ENCODE measurements at regions of chr2 and their contacts with region 1.

Region 1: DNA sequence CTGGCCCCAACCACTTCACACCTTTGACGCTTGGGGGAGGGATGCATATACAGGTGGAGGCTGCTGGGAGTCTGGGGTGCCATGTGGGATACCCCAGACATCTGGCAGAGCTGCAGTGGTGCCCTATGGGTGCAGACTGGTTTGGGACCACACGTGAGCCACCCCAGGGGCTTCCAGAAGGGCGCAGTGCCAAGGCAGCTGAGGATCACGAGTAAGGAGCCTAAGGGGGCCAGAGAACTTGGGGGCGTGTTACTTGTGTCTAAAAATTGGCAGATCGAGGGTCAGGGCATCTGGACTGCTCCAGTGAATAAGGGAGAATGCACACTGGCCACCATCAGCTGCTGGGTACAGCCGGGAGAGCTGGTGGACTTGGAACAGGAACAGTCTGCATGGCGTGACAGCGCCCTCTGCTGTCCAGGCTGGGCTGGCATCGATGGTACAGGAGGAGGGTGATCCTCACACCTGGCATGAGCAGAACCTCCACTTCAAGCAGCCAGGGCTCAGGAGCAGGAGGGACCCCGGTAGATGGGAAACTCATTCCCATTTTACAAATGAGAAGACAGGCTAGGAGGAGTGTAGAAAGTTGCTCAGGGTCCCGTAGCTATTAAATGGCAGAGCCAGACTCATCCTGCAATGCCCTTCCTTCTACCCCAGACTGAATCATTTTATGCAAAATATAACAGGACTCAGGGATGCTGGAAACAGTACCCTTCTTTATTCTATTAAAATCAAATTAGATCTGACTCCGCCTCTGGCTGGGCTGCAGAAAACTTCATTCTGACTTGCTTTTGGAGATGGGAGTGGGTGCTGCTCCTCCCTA is 60.4 kb downstream of the ATOH8 start:
- DNase-seq: peak; percentile 84 to 93
- ATAC-seq: peak; percentile 94 to 98
- H3K4me3 ChIP-seq: no peak overlapping the region
- H3K27ac ChIP-seq: peak overlapping the region in 2 of 4 donors; percentile 1 to 27
- H3K4me1 ChIP-seq: peaks cover 8 to 11% of the 10 kb centered on the region in 2 donors
- H3K27me3 ChIP-seq: no peaks in the 10 kb centered on the region
- CTCF ChIP-seq: peak; percentile 96 to 99 (median 98)
- POLR2A ChIP-seq: no peak

Region 2: GRCh38 chr2:85595301-85596025 is 218.7 kb before region 1 on chr2 and contains the start of gene RNF181:
- in situ Hi-C with region 1: no loop called
- intact Hi-C with region 1: no loop called
- DNase-seq: peak; percentile 98
- ATAC-seq: peak; percentile 99
- H3K4me3 ChIP-seq: peak within 1 kb of the TSS; percentile 55 to 98 (median 78)
- H3K27ac ChIP-seq: peak within 1 kb of the TSS; percentile 87 to 99 (median 94)
- H3K4me1 ChIP-seq: peaks cover 49 to 55% of the 10 kb centered on the region in 2 donors
- H3K27me3 ChIP-seq: no peaks in the 10 kb centered on the region
- CTCF ChIP-seq: no peak
- POLR2A ChIP-seq: peak; percentile 90 to 92
- total RNA-seq, gene RNF181: 207 to 235 (median 215) TPM

Region 3: DNA sequence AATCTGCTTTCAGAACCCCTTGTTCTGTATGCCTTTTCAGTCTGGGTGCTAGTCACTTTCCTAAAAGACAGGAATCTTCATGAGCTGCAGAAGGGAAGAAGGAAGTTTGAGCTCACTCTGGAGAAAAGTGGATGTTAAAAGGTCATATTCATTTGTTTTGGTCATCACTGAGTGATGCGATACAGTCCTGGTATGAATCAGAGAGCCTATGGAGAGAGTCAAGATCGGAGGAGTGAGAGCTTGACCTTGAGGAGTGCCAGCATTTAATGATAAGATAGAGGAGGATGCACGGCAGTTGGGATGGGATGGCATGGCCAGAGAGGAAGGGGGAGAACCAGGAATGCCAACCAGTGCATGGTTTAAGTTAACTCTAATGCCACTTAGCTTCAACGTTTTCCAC is 178.6 kb before region 1 on chr2:
- in situ Hi-C with region 1: loop called (anchors 5 to 10 kb)
- intact Hi-C with region 1: loop called (anchors 1 kb)
- DNase-seq: no peak
- ATAC-seq: no peak
- H3K4me3 ChIP-seq: no peak overlapping the region
- H3K27ac ChIP-seq: peak overlapping the region in 1 of 4 donors; percentile 1
- H3K4me1 ChIP-seq: no peaks in the 10 kb centered on the region
- H3K27me3 ChIP-seq: no peaks in the 10 kb centered on the region
- CTCF ChIP-seq: no peak
- POLR2A ChIP-seq: no peak

Region 4: GRCh38 chr2:85642725-85643124 is 171.5 kb before region 1 on chr2:
- in situ Hi-C with region 1: loop called (anchors 5 to 10 kb)
- intact Hi-C with region 1: loop called (anchors 1 kb)
- DNase-seq: peak in 1 of 2 donors; percentile 1
- ATAC-seq: no peak
- H3K4me3 ChIP-seq: no peak overlapping the region
- H3K27ac ChIP-seq: peak overlapping the region in 3 of 4 donors; percentile 77 to 92 (median 87)
- H3K4me1 ChIP-seq: peaks cover 8 to 11% of the 10 kb centered on the region in 2 donors
- H3K27me3 ChIP-seq: no peaks in the 10 kb centered on the region
- CTCF ChIP-seq: no peak
- POLR2A ChIP-seq: no peak

Region 5: GRCh38 chr2:85678794-85679672 is 135.2 kb before region 1 on chr2:
- in situ Hi-C with region 1: no loop called
- intact Hi-C with region 1: loop called (anchors 2 kb)
- DNase-seq: peak; percentile 86 to 94
- ATAC-seq: peak; percentile 38 to 50
- H3K4me3 ChIP-seq: no peak overlapping the region
- H3K27ac ChIP-seq: peak overlapping the region; percentile 87 to 93 (median 90)
- H3K4me1 ChIP-seq: peaks cover 45 to 57% of the 10 kb centered on the region in 2 donors
- H3K27me3 ChIP-seq: no peaks in the 10 kb centered on the region
- CTCF ChIP-seq: peak; percentile 98 to 100 (median 99)
- POLR2A ChIP-seq: no peak

Region 6: GRCh38 chr2:85723707-85724360 is 90.4 kb before region 1 on chr2:
- in situ Hi-C with region 1: loop called (anchors 5 to 10 kb)
- intact Hi-C with region 1: loop called (anchors 1 kb)
- DNase-seq: peak in 1 of 2 donors; percentile 4
- ATAC-seq: no peak
- H3K4me3 ChIP-seq: no peak overlapping the region
- H3K27ac ChIP-seq: no peak overlapping the region
- H3K4me1 ChIP-seq: peaks cover 19 to 38% of the 10 kb centered on the region in 2 donors
- H3K27me3 ChIP-seq: no peaks in the 10 kb centered on the region
- CTCF ChIP-seq: no peak
- POLR2A ChIP-seq: no peak

Region 7: GRCh38 chr2:85750587-85751575 is 63.3 kb before region 1 on chr2:
- in situ Hi-C with region 1: loop called in 1 of 4 experiments (anchors 10 kb)
- intact Hi-C with region 1: loop called (anchors 1 kb)
- DNase-seq: peak in 1 of 2 donors; percentile 82
- ATAC-seq: peak; percentile 27 to 37
- H3K4me3 ChIP-seq: no peak overlapping the region
- H3K27ac ChIP-seq: peak overlapping the region; percentile 86 to 95 (median 93)
- H3K4me1 ChIP-seq: peaks cover 52 to 64% of the 10 kb centered on the region in 2 donors
- H3K27me3 ChIP-seq: no peaks in the 10 kb centered on the region
- CTCF ChIP-seq: peak; percentile 68 to 90 (median 83)
- POLR2A ChIP-seq: no peak

Measured in gastrocnemius medialis (tissue), 4 donors.